ENCODE measurements at regions of chr10 and their contacts with region 1.

Region 1: DNA sequence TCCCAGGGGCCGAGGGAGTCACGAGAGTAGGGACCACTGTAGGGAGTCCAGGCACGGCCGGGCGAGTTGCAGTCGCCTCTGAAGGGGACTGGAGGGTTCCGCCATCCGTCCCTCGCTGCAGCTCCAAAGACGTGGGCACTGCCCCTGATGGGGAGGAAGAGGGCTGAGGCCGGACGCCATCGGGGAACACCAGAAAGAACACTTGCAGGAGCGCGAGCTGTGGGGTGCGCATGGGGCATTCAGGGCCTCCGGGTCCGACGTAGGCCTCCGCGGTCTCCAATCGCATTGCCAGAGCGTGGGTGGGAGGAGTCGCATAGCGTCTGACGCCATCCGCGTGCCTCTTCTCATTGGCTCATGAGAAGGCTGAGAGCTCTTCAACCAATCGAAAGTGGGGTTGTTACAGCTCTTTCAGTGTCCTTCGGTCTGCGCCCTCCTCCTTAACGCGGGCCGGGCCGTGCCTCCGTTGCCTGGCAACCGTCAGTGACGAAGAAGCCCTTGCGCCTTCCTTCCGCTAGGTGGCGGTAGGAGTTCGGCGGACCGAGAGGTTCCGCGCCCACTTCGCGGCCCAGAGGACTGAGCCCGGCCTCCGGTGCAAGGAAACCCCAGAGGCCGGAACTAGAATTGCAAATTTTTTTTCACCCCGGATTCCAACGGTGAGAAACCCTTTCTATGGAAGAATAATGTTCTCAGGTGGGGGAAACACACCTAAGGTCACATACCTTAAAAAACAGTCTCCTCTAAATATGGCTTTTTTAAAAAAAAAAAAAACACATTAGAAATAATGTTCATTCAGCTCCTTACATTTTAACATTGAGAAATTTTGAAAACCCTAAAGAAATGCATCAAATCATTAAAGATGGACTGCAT is at the start of gene TCTN3:
- DNase-seq: peak; percentile 93 to 98
- ATAC-seq: peak; percentile 100
- H3K4me3 ChIP-seq: peak within 1 kb of the TSS; percentile 67 to 97 (median 86)
- H3K27ac ChIP-seq: peak within 1 kb of the TSS in 9 of 10 donors; percentile 72 to 88 (median 85)
- H3K4me1 ChIP-seq: peaks cover 6 to 45% (median 17%) of the 10 kb centered on the region in 9 donors
- H3K27me3 ChIP-seq: no peaks in the 10 kb centered on the region
- CTCF ChIP-seq: peak; percentile 98 to 100 (median 99)
- total RNA-seq, gene TCTN3: 9.1 to 17.5 (median 11.4) TPM

Region 2: GRCh38 chr10:95741807-95742467 is 48.0 kb after region 1 on chr10:
- intact Hi-C with region 1: loop called in 1 of 10 experiments (anchors 5 kb)
- DNase-seq: peak in 1 of 2 donors; percentile 74
- ATAC-seq: peak; percentile 94 to 99 (median 96)
- H3K4me3 ChIP-seq: no peak overlapping the region
- H3K27ac ChIP-seq: peak overlapping the region; percentile 62 to 85 (median 78)
- H3K4me1 ChIP-seq: peaks cover 0 to 41% (median 28%) of the 10 kb centered on the region in 9 donors
- H3K27me3 ChIP-seq: no peaks in the 10 kb centered on the region
- CTCF ChIP-seq: peak in 5 of 9 donors; percentile 12 to 50 (median 38)

Region 3: GRCh38 chr10:95841661-95842498 is 148.0 kb after region 1 on chr10:
- intact Hi-C with region 1: loop called (anchors 1 to 5 kb)
- DNase-seq: peak in 1 of 2 donors; percentile 73
- ATAC-seq: peak in 7 of 8 donors; percentile 53 to 91 (median 84)
- H3K4me3 ChIP-seq: no peak overlapping the region
- H3K27ac ChIP-seq: peak overlapping the region in 9 of 10 donors; percentile 1 to 80 (median 65)
- H3K4me1 ChIP-seq: peaks cover 0 to 43% (median 19%) of the 10 kb centered on the region in 9 donors
- H3K27me3 ChIP-seq: no peaks in the 10 kb centered on the region
- CTCF ChIP-seq: peak; percentile 48 to 77 (median 65)

Region 4: DNA sequence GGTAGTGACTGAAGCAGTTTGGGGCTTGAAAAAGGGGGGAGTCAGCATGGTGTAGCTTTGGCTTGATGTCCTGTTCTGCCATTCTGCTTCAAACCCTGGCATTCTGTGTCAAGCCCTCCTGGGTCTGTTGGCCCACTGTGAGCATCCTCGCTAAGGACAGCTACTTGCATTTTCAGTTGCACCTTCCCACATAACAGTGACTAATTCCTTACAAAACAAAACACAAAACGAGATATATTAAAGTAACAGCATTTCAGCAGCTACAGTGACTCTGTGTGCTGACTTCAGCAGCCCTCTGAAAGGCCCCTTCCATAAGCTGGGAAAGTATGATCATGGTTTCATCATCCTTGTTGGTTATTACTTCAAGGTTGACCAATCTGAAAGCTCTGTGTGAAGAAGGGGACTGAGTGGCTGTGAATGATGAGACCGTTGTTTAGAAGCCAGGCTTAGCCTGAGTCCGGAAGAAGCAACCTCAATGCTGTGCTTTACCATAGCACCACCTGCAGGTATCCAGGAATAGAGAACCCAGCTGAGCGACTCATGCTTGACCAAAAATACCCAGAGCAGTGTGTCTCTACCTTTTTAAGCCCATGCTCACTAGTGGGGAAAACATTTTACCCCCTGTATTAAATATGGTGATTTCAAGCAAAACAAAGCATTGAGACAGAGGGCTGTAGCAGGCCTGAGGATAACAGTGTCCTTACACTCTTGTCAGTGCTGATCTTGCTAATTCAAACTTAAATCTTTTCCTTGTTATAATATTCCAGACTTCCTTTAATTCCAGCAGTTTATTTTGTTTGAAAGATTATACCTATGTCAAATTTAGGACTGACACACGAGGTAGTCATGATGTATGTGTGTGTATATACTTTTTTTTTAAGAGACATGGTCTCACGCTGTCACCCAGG is 171.3 kb after region 1 on chr10:
- intact Hi-C with region 1: loop called in 7 of 10 experiments (anchors 1 to 5 kb)
- DNase-seq: peak in 1 of 2 donors; percentile 36
- ATAC-seq: peak; percentile 70 to 89 (median 86)
- H3K4me3 ChIP-seq: no peak overlapping the region
- H3K27ac ChIP-seq: peak overlapping the region in 1 of 10 donors; percentile 6
- H3K4me1 ChIP-seq: peaks cover 0 to 6% (median 0%) of the 10 kb centered on the region in 9 donors
- H3K27me3 ChIP-seq: no peaks in the 10 kb centered on the region
- CTCF ChIP-seq: peak; percentile 18 to 75 (median 65)

Region 5: DNA sequence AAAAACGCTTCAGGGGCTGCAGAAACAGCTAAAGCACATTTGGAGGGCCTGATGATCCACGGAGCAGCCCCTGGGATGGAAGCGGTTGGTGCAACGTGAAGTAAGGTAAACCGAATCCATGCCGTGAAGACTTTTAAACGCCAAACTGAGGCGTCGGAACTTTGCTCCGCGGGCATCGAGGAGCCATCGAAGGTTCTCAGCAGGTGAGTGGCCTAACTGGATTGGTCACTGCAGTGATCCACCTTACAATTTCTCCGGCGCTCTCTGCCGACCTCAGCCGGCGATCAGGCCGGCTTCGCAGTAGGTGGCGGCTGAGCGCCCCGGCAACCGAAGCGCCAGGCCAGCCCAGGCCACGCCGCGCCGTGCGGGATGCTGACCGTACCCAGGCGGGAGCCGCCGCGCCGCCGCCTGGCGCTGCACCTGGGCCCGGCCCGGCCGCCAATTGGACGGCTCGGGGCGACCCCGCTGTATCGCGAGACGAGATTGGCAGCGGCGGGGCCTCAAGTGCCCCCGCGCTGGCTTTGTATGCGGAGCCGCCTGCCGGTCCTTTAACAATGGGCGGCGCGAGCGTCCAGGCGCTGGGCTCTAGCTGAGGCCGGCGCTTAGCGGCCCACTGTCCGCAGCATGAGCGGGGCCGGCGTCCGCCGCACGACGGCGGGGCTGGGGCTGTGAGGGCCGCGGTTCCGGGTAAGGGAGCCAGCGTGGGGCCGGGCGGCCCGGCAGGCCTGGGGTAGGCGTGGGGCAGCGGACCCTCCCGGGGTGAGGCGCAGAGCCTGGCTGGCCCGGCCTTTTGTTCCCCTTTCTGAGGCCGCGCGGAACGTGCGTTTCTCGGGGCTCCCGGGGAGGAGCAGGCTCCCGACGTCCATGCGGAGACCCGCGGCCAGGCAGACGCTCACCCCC is 349.4 kb after region 1 on chr10 and contains the start of gene CCNJ:
- intact Hi-C with region 1: loop called in 1 of 10 experiments (anchors 10 kb)
- DNase-seq: peak; percentile 90 to 91
- ATAC-seq: peak; percentile 96 to 99 (median 98)
- H3K4me3 ChIP-seq: peak within 1 kb of the TSS; percentile 52 to 92 (median 84)
- H3K27ac ChIP-seq: peak within 1 kb of the TSS in 9 of 10 donors; percentile 79 to 94 (median 89)
- H3K4me1 ChIP-seq: peaks cover 0 to 28% (median 19%) of the 10 kb centered on the region in 9 donors
- H3K27me3 ChIP-seq: no peaks in the 10 kb centered on the region
- CTCF ChIP-seq: peak in 5 of 9 donors; percentile 22 to 51 (median 35)
- total RNA-seq, gene CCNJ: 1.8 to 3.6 (median 2.8) TPM

Measured in heart right ventricle (tissue), 16 donors.